Endothelial cell of umbilical vein (primary cell): ENCODE measurements at regions of chr18 and their contacts with region 1.

Region 1: DNA sequence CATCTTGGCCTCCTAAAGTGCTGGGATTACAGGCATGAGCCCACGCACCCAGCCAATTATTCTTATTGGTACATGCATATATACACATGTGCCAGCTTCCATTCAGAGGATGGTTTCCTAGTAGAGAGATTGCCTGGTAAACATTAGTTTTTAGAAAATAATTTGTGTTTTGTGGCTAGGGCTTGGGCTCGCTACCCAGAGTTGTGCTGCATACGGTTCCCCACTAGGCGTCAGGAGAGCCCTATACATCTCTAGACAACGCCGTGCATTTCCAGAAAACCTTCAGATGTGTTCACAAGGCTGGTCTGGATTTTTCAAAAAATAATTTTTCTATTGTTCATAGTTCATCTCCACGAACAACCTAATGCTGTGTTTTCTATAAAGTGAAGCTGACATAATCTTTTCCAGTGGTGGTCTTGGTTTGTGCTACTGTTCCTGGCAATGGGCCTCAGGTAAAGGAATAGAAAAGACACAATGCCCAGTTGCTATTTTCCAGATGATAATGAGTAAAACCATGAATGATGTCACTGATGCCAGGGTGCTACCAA is 14.7 kb upstream of the AFG3L2 start:
- DNase-seq: peak; percentile 73
- H3K4me3 ChIP-seq: no peak overlapping the region
- H3K27ac ChIP-seq: no peak overlapping the region
- H3K4me1 ChIP-seq: no peaks in the 10 kb centered on the region
- H3K27me3 ChIP-seq: no peaks in the 10 kb centered on the region
- CTCF ChIP-seq: peak; percentile 89 to 97
- POLR2A ChIP-seq: no peak

Region 2: DNA sequence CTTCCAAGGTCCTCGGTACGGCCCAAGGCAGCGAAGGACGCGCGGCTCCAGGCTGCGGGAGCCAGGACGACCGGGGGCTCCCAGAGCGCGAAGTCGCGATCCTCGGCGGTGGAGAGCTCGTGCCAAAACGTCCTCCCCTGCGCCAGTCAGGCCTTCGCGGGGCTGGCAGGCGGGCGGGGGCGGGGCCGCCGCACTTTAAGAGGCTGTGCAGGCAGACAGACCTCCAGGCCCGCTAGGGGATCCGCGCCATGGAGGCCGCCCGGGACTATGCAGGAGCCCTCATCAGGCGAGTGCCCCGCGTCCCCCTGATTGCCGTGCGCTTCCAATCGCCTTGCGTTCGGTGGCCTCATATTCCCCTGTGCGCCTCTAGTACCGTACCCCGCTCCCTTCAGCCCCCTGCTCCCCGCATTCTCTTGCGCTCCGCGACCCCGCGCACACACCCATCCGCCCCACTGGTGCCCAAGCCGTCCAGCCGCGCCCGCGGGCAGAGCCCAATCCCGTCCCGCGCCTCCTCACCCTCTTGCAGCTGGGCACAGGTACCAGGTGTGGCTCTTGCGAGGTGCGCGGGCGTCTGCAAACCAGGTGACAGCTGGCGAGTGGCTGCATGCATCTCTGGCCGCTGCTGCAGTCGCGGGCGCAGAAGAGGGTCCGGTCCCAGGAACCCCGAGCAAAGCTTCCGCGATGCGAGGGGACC is 137.4 kb before region 1 on chr18 and contains the start of gene CIDEA:
- CTCF ChIA-PET with region 1: no interaction called
- POLR2A ChIA-PET with region 1: no interaction called
- dilution Hi-C with region 1: no loop called
- intact Hi-C with region 1: no loop called
- DNase-seq: no peak
- H3K4me3 ChIP-seq: peak within 1 kb of the TSS in 2 of 3 experiments; percentile 7 to 39
- H3K27ac ChIP-seq: no peak within 1 kb of the TSS
- H3K4me1 ChIP-seq: peaks cover 26% of the 10 kb centered on the region
- H3K27me3 ChIP-seq: peaks cover 22 to 30% of the 10 kb centered on the region in 2 experiments
- CTCF ChIP-seq: no peak
- POLR2A ChIP-seq: no peak
- total RNA-seq, gene CIDEA: 0.42 and 1.8 TPM in 2 replicates

Region 3: GRCh38 chr18:12403601-12404506 is 12.2 kb after region 1 on chr18:
- CTCF ChIA-PET with region 1: interaction called, 14 read pairs
- POLR2A ChIA-PET with region 1: no interaction called
- dilution Hi-C with region 1: no loop called
- intact Hi-C with region 1: no loop called
- DNase-seq: peak; percentile 68
- H3K4me3 ChIP-seq: no peak overlapping the region
- H3K27ac ChIP-seq: peak overlapping the region; percentile 21
- H3K4me1 ChIP-seq: peaks cover 16% of the 10 kb centered on the region
- H3K27me3 ChIP-seq: peaks cover 11 to 13% of the 10 kb centered on the region in 2 experiments
- CTCF ChIP-seq: no peak
- POLR2A ChIP-seq: no peak

Region 4: DNA sequence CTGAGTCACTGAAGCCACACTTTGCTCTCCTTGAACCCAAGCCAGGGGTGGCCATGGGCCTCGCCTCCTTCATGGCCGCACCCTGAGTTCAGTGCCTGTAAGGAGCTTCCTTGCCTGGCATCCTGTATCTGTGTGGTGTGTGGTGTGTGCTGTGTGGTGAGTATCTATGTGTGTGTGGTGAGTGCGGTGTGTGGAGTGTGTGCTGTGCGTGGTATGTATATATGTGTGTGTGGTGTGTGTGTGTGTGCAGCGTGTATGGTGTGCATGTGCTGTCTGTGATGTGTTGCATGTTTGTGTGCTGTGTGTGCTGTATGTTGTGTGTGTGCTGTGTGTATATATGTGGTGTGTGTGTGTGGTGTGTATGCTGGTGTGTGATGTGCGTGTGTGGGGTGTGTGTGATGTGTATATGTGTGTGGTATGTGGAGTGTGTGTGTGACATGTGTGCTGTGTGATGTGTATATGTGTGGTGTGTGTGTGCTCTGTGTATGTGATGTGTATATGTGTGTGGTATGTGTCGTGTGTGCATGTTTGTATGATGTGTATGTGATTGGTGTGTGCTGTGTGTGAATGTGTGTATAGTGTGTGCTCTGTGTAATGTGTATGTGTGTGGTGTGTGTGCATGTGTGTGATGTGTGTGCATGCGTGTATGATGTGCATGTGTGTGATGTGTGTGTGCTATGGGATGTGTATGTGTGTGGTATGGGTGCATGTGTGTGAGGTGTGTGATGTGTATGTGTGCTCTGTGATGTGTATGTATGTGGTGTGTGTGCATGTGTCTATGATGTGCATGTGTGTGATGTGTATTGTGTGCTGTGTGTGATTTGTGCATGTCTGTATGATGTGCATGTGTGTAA is 38.7 kb after region 1 on chr18:
- CTCF ChIA-PET with region 1: no interaction called
- POLR2A ChIA-PET with region 1: no interaction called
- dilution Hi-C with region 1: no loop called
- intact Hi-C with region 1: no loop called
- DNase-seq: no peak
- H3K4me3 ChIP-seq: no peak overlapping the region
- H3K27ac ChIP-seq: no peak overlapping the region
- H3K4me1 ChIP-seq: peaks cover 4% of the 10 kb centered on the region
- H3K27me3 ChIP-seq: no peaks in the 10 kb centered on the region
- CTCF ChIP-seq: no peak
- POLR2A ChIP-seq: no peak

Region 5: DNA sequence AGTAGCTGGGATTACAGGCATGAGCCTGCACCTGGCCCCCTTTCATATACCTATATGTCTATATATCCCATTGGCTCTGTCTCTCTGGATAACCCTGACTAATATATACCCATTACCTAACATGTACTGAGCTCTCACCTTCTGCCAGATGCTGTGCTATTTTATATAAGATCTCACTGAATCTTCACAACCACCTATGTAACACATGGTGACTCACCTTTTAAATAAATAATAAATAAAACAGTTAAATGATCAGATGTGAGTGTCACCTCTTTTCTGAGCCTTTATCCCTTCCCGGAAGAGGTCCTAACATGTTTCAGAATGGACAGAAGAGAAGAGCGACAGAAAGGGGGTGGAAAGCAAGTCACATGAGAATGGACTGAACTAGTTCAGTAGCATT is 143.1 kb after region 1 on chr18:
- CTCF ChIA-PET with region 1: interaction called, 3 read pairs
- POLR2A ChIA-PET with region 1: no interaction called
- dilution Hi-C with region 1: no loop called
- intact Hi-C with region 1: loop called (anchors 5 kb)
- DNase-seq: no peak
- H3K4me3 ChIP-seq: no peak overlapping the region
- H3K27ac ChIP-seq: no peak overlapping the region
- H3K4me1 ChIP-seq: no peaks in the 10 kb centered on the region
- H3K27me3 ChIP-seq: no peaks in the 10 kb centered on the region
- CTCF ChIP-seq: no peak
- POLR2A ChIP-seq: no peak

Region 6: GRCh38 chr18:12702221-12703095 is 310.8 kb after region 1 on chr18 and contains the starts of genes CEP76 and PSMG2:
- CTCF ChIA-PET with region 1: interaction called, 6 read pairs
- POLR2A ChIA-PET with region 1: no interaction called
- dilution Hi-C with region 1: no loop called
- intact Hi-C with region 1: loop called (anchors 1 kb)
- DNase-seq: peak; percentile 94
- H3K4me3 ChIP-seq: peak within 1 kb of the TSS; percentile 53 to 90 (median 89)
- H3K27ac ChIP-seq: peak within 1 kb of the TSS; percentile 93
- H3K4me1 ChIP-seq: peaks cover 19% of the 10 kb centered on the region
- H3K27me3 ChIP-seq: no peaks in the 10 kb centered on the region
- CTCF ChIP-seq: no peak
- POLR2A ChIP-seq: peak; percentile 77
- total RNA-seq, gene CEP76: 8.6 and 8.8 TPM in 2 replicates
- total RNA-seq, gene PSMG2: 71.0 and 72.3 TPM in 2 replicates

Region 7: DNA sequence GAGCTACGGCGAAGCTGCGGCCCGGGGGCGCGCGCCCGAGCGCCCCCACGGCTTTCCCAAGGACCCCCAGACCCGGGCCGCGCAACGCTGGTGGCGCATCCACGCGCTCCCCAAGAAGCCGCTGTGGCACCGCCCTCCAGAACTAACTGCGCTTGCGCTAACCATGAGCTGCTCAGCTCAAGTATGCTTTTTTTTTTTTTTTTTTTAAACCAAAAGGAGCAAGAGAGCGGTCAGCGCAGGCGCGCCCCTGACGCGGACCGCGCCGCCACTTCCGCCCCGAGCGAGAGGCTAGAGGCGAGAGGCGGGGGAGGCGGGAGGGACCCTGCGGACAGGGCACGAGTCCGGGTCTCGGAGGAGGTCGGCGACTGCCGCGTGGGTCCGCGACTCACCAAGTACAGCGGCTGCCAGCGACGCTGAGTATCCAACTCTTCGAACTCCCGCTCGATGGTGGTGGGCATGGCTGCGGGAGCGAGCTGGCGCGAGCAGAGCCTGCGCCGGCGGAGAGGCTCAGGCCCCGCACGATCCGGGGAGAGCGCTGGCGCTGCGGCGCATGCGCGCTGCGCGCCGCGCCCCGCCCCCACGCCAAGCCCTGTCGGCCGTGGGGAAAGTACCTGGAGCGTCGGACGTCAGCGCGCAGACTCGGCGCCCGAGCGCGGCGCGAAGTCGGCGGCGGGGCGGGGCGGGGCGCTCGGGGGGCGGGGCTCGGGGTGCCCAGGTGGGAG is 492.2 kb after region 1 on chr18 and contains the start of gene PTPN2:
- CTCF ChIA-PET with region 1: no interaction called
- POLR2A ChIA-PET with region 1: no interaction called
- dilution Hi-C with region 1: no loop called
- intact Hi-C with region 1: loop called (anchors 5 kb)
- DNase-seq: peak; percentile 95
- H3K4me3 ChIP-seq: peak within 1 kb of the TSS; percentile 72 to 92 (median 74)
- H3K27ac ChIP-seq: peak within 1 kb of the TSS; percentile 97
- H3K4me1 ChIP-seq: peaks cover 6% of the 10 kb centered on the region
- H3K27me3 ChIP-seq: no peaks in the 10 kb centered on the region
- CTCF ChIP-seq: no peak
- POLR2A ChIP-seq: peak; percentile 96
- total RNA-seq, gene PTPN2: 20.9 and 21.7 TPM in 2 replicates